Esophagus muscularis mucosa (tissue), 4 donors: ENCODE measurements at regions of chr2 and their contacts with region 1.

Region 1: GRCh38 chr2:224520064-224520463 is 65.1 kb downstream of the CUL3 start:
- DNase-seq: no peak
- H3K4me3 ChIP-seq: no peak overlapping the region
- H3K27ac ChIP-seq: peak overlapping the region in 3 of 4 donors; percentile 0 to 34 (median 11)
- H3K4me1 ChIP-seq: peaks cover 30 to 78% (median 73%) of the 10 kb centered on the region in 4 donors
- H3K27me3 ChIP-seq: no peaks in the 10 kb centered on the region
- CTCF ChIP-seq: no peak
- EP300 ChIP-seq: no peak
- POLR2A ChIP-seq: no peak

Region 2: DNA sequence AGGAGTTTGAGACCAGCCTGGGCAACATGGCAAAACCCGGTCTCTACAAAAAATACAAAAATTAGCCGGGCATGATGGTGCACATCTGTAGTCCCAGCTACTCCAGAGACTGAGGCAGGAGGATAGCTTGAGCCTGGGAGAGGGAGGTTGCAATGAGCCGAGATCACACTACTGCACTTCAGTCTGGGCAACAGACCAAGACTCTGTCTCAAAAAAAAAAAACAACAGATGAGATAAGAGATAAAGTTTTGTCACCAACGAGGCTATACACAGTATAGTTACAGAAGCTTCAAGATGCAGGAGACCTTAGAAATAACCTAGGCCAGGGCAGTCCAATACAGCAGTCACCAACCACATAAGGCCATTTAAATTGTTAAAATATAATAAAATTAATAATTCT is 127.5 kb before region 1 on chr2:
- intact Hi-C with region 1: no loop called
- DNase-seq: no peak
- H3K4me3 ChIP-seq: no peak overlapping the region
- H3K27ac ChIP-seq: no peak overlapping the region
- H3K4me1 ChIP-seq: peaks cover 0 to 7% (median 0%) of the 10 kb centered on the region in 4 donors
- H3K27me3 ChIP-seq: no peaks in the 10 kb centered on the region
- CTCF ChIP-seq: no peak
- EP300 ChIP-seq: no peak
- POLR2A ChIP-seq: no peak

Region 3: DNA sequence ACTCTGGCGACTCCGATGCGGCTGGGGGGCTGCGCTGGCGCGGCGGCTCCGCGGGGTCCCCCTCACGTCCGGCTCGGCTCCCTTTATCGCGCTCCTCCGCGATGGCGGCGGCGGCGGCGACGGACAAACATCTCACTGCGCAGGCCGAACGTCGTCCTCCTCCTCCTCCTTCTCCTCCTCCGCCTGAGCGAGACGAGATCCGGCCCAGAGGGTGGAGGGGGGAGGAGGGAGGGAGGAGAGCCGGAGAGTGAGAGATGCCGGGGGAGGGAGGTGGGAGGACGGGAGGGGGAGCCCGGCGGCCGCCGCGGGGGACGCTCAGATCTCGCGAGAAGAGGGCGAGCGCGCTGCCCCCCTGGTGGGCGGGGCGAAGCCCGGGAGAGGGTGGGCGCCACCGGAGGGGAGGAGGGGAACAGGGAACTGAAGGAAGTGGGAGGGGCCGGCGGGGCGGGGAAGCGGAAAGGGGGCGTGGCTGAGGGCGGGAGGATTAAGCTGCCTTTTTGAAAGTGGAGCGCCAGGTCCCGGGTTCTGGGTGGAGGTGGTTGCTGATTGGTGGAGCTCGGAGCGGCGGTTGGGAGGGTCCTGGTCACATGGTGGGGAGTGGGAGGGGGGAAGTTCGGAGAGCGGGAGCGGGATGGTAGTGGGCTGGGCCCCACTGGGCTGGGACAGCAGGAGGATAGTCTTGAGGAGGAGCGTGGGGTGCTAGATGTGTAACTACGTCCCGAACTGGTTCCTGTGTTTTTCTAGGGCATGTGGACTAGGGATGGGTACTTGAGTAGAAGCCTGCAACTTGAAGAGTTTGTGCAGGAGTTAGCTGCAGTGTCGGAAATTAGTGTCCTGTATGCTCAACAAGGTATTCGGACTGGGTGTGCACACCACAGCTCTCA is 65.4 kb after region 1 on chr2 and contains the start of gene CUL3:
- intact Hi-C with region 1: loop called (anchors 10 kb)
- DNase-seq: peak; percentile 100
- H3K4me3 ChIP-seq: peak within 1 kb of the TSS; percentile 78 to 91 (median 79)
- H3K27ac ChIP-seq: peak within 1 kb of the TSS; percentile 90 to 94 (median 91)
- H3K4me1 ChIP-seq: peaks cover 27 to 45% (median 44%) of the 10 kb centered on the region in 4 donors
- H3K27me3 ChIP-seq: no peaks in the 10 kb centered on the region
- CTCF ChIP-seq: no peak
- EP300 ChIP-seq: no peak
- POLR2A ChIP-seq: peak; percentile 63
- total RNA-seq, gene CUL3: 50.9 to 66.4 (median 59.7) TPM